CD4-positive, alpha-beta memory T cell (primary cell): ENCODE measurements at regions of chr19 and their contacts with region 1.

Region 1: DNA sequence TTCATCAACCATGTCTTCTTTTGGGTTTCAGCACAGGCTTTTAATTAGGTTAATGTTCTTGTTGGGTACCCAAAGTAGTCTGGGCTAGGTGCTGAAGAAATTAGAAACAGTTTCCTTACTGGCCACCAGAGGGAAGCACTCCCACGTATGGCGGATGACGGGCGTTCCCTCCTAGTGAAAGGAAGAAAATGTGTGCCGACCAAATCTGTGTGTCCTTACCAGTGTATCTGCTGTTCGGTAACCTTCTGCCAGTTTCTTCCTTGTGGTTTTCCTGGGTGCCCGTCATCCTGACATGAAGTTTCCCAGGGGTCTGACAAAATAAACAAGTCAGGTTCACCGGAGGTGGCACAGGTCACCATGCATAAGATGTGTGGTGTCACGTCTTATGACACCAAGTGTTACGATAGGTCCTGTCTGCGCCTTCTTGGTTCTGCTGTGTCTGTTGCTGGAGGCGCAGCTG is 6.0 kb upstream of the WDR88 start:
- DNase-seq: peak in 4 of 5 donors; percentile 54 to 61 (median 58)
- H3K4me3 ChIP-seq: no peak overlapping the region
- H3K4me3 Mint-ChIP-seq: peak overlapping the region in 4 of 8 donors; percentile 15 to 51 (median 24)
- H3K27ac ChIP-seq: no peak overlapping the region
- H3K27ac Mint-ChIP-seq: peak overlapping the region in 1 of 7 donors; percentile 57
- H3K4me1 ChIP-seq: no peaks in the 10 kb centered on the region
- H3K4me1 Mint-ChIP-seq: peaks cover 4 to 8% (median 6%) of the 10 kb centered on the region in 4 donors
- H3K27me3 ChIP-seq: no peaks in the 10 kb centered on the region
- H3K27me3 Mint-ChIP-seq: no peaks in the 10 kb centered on the region

Region 2: DNA sequence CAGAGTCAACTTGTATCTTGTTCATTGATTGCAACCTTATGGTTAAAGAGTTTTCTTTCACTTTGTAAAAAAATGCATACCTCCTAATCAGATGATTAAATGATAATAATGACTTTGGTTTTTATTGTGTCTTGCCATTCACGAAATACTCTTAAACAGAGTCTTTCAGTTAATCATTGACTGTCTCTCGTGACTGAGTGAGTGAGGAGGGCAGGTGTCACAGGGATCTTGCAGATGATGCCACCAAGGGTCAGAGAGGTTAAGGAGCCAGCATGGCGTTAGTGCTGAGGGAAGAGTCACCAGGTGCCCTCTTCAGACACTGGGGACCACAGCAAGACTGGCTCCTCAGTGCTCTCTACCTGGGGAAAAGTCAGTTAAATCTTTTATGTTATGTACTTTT is 36.9 kb before region 1 on chr19:
- CTCF ChIA-PET with region 1: no interaction called
- POLR2A ChIA-PET with region 1: no interaction called
- intact Hi-C with region 1: no loop called
- DNase-seq: no peak
- H3K4me3 ChIP-seq: no peak overlapping the region
- H3K4me3 Mint-ChIP-seq: no peak overlapping the region
- H3K27ac ChIP-seq: no peak overlapping the region
- H3K27ac Mint-ChIP-seq: no peak overlapping the region
- H3K4me1 ChIP-seq: peaks cover 4% of the 10 kb centered on the region
- H3K4me1 Mint-ChIP-seq: peaks cover 3 to 11% (median 9%) of the 10 kb centered on the region in 4 donors
- H3K27me3 ChIP-seq: no peaks in the 10 kb centered on the region
- H3K27me3 Mint-ChIP-seq: no peaks in the 10 kb centered on the region

Region 3: DNA sequence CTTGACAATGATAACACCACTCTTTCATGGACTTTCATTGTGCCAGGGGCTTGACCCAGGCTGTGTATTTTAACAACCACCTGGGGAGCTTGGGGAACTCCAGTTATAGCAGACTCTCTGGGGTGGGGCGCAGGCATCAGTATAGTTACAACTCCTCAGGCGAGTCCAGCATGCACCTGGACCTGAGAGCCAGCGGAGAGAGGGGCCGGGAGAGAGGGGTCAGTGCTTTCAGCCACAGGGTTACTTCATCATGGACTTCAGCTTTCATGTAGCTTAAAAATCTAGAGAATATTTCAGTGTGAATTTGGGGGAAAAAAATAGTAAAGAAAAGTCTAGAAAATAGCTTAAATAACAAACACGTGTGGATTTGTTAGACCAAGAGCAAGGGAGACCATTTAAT is 21.4 kb before region 1 on chr19:
- CTCF ChIA-PET with region 1: interaction called, 11 read pairs
- POLR2A ChIA-PET with region 1: no interaction called
- intact Hi-C with region 1: no loop called
- DNase-seq: no peak
- H3K4me3 ChIP-seq: no peak overlapping the region
- H3K4me3 Mint-ChIP-seq: no peak overlapping the region
- H3K27ac ChIP-seq: no peak overlapping the region
- H3K27ac Mint-ChIP-seq: peak overlapping the region in 2 of 7 donors; percentile 9 to 22
- H3K4me1 ChIP-seq: no peaks in the 10 kb centered on the region
- H3K4me1 Mint-ChIP-seq: peaks cover 0 to 3% (median 0%) of the 10 kb centered on the region in 4 donors
- H3K27me3 ChIP-seq: no peaks in the 10 kb centered on the region
- H3K27me3 Mint-ChIP-seq: no peaks in the 10 kb centered on the region

Region 4: DNA sequence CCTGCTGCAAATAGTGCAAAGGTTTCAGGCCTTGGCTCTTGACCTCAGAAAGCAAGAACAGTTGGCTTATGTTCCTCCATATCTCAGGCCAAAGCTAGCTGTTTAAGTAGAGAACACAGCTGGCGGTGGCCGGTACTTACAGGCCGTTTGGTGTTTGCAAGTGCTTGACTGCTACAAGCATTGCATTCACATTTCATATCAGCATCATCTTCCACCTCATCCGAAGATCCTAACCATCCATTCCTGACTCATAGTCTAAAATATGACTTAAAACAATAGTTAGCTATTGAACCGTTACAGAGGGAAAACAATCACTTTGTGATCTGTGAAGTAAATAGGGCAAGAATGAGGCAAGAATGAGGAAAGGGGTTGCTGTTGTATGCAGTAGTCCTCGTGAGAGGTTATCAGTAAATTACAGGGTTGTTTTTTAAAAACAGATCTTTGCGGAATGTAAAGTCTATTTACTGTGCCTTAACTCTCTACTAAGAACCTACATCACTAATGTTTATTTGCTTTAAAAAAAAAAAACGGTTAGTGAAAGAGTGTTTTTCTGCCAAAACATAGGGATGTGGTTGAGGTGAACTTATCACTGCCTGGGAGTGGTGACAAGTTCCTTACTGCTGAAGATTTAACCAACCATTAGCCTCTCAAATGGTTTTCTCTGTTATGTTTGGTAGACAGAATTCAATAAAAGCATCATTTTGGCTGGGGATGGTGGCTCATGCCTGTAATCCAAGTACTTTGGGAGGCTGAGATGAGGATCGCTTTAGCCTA is 15.6 kb before region 1 on chr19:
- CTCF ChIA-PET with region 1: interaction called, 10 read pairs
- POLR2A ChIA-PET with region 1: no interaction called
- intact Hi-C with region 1: no loop called
- DNase-seq: no peak
- H3K4me3 ChIP-seq: no peak overlapping the region
- H3K4me3 Mint-ChIP-seq: no peak overlapping the region
- H3K27ac ChIP-seq: no peak overlapping the region
- H3K27ac Mint-ChIP-seq: no peak overlapping the region
- H3K4me1 ChIP-seq: no peaks in the 10 kb centered on the region
- H3K4me1 Mint-ChIP-seq: no peaks in the 10 kb centered on the region
- H3K27me3 ChIP-seq: no peaks in the 10 kb centered on the region
- H3K27me3 Mint-ChIP-seq: no peaks in the 10 kb centered on the region

Region 5: DNA sequence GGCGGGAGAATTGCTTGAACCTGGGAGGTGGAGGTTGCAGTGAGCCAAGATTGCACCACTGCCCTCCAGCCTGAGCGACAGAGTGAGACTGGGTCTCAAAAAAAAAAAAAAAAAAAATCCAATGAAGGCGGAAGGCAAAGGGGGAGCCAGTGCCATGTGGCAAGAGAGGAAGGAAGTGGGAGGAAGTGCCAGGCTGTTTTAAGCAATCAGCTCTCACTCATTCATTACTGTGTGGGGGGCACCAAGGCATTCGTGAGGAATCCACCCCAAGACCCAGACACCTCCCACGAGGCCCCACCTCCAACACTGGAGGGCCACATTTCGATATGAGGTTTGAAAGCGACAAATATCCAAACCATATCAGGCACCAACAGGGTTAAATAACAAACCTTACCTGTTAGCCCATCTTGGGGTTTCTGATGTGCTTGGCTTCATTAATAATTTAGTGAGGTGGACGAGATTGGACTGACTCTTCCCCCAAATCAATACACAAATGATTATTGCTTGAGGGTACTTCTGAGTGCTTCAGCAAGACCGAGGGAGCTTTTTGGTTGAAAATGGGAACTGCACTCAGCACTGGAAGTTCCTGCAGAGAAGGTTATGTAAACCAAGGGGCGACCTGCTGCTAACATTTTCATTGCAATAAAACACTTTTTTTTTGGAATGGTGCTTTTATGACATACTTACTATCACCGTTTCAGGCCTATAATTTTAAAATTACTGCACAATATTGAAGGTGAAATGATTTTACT is 60.6 kb after region 1 on chr19:
- CTCF ChIA-PET with region 1: interaction called, 51 read pairs
- POLR2A ChIA-PET with region 1: no interaction called
- intact Hi-C with region 1: loop called (anchors 1 kb)
- DNase-seq: no peak
- H3K4me3 ChIP-seq: no peak overlapping the region
- H3K4me3 Mint-ChIP-seq: no peak overlapping the region
- H3K27ac ChIP-seq: no peak overlapping the region
- H3K27ac Mint-ChIP-seq: no peak overlapping the region
- H3K4me1 ChIP-seq: peaks cover 6% of the 10 kb centered on the region
- H3K4me1 Mint-ChIP-seq: peaks cover 0 to 11% (median under 1%) of the 10 kb centered on the region in 4 donors
- H3K27me3 ChIP-seq: no peaks in the 10 kb centered on the region
- H3K27me3 Mint-ChIP-seq: peaks cover 0 to 7% of the 10 kb centered on the region in 2 donors

Region 6: DNA sequence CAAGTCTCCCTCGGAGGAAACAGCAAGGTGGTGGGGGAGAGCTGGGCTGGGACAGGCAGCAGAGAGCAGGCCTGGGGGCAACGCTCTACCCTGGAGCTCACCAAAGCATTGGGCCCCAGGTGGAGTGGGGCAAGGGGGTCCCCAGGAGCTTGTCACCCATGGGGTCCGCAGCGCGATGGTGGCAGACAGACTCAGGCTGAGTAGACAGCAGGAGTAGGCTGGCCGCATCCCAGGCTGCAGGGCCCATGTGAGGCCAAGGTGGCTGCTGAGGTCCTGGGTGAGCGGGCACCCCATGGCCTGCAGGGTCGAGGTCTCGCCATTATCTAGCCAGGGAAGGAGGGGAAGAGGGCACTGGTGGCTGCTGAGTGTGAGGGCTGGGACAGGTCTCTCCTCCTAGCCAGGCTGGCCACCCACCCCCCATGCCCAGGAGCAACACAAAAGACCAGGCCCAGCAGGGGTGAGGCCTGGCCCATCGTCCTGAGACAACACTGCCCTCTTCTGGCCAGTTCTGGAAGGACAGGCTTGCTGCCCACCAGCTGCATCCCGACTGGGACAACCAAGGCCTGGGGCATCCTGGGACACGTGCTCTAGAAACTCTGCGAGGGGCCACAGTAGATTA is 280.7 kb after region 1 on chr19:
- CTCF ChIA-PET with region 1: interaction called, 5 read pairs
- POLR2A ChIA-PET with region 1: no interaction called
- intact Hi-C with region 1: loop called (anchors 5 kb)
- DNase-seq: peak; percentile 52 to 69 (median 56)
- H3K4me3 ChIP-seq: no peak overlapping the region
- H3K4me3 Mint-ChIP-seq: no peak overlapping the region
- H3K27ac ChIP-seq: no peak overlapping the region
- H3K27ac Mint-ChIP-seq: peak overlapping the region in 1 of 7 donors; percentile 2
- H3K4me1 ChIP-seq: no peaks in the 10 kb centered on the region
- H3K4me1 Mint-ChIP-seq: no peaks in the 10 kb centered on the region
- H3K27me3 ChIP-seq: no peaks in the 10 kb centered on the region
- H3K27me3 Mint-ChIP-seq: no peaks in the 10 kb centered on the region